MCF 10A (cell line): ENCODE measurements at regions of chr4 and their contacts with region 1.

Region 1: GRCh38 chr4:138242076-138242833 is at the start of gene SLC7A11:
- DNase-seq: peak; percentile 98
- H3K4me3 Mint-ChIP-seq: peak within 1 kb of the TSS; percentile 97
- H3K27ac Mint-ChIP-seq: peak within 1 kb of the TSS; percentile 91
- H3K4me1 Mint-ChIP-seq: peaks cover 11% of the 10 kb centered on the region
- H3K27me3 Mint-ChIP-seq: no peaks in the 10 kb centered on the region
- CTCF ChIP-seq: no peak
- total RNA-seq, gene SLC7A11: 103 and 153 TPM in 2 replicates

Region 2: DNA sequence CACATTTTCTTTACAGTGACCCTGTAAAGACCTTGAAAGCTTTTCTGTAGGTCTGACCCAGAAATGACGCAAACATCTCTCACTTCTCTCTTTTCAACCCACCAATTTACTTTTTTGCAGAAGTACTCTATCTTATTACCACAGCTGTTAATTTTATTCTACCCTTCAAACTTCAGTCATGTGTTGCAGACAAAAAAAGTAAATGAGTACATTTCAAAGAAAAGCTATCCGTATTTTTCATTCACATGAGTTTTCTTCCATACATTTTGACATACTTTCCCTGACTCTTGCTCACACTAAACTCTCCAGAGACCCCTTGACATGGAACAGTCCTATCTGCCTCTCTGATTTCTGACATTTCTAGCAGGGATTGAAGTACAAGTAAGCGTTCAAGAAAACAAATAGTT is 51.8 kb before region 1 on chr4:
- CTCF ChIA-PET with region 1: interaction called, 3 read pairs
- POLR2A ChIA-PET with region 1: interaction called, 19 read pairs
- intact Hi-C with region 1: loop called (anchors 5 kb)
- DNase-seq: no peak
- H3K4me3 Mint-ChIP-seq: no peak overlapping the region
- H3K27ac Mint-ChIP-seq: no peak overlapping the region
- H3K4me1 Mint-ChIP-seq: peaks cover 11% of the 10 kb centered on the region
- H3K27me3 Mint-ChIP-seq: no peaks in the 10 kb centered on the region
- CTCF ChIP-seq: no peak

Region 3: GRCh38 chr4:138209094-138209493 is 33.2 kb before region 1 on chr4:
- CTCF ChIA-PET with region 1: no interaction called
- POLR2A ChIA-PET with region 1: interaction called, 31 read pairs
- intact Hi-C with region 1: no loop called
- DNase-seq: peak; percentile 75
- H3K4me3 Mint-ChIP-seq: no peak overlapping the region
- H3K27ac Mint-ChIP-seq: peak overlapping the region; percentile 49
- H3K4me1 Mint-ChIP-seq: peaks cover 25% of the 10 kb centered on the region
- H3K27me3 Mint-ChIP-seq: no peaks in the 10 kb centered on the region
- CTCF ChIP-seq: no peak

Region 4: GRCh38 chr4:138259801-138260200 is 17.5 kb after region 1 on chr4:
- CTCF ChIA-PET with region 1: interaction called, 6 read pairs
- POLR2A ChIA-PET with region 1: interaction called, 74 read pairs
- intact Hi-C with region 1: loop called (anchors 1 kb)
- DNase-seq: peak; percentile 71
- H3K4me3 Mint-ChIP-seq: no peak overlapping the region
- H3K27ac Mint-ChIP-seq: peak overlapping the region; percentile 93
- H3K4me1 Mint-ChIP-seq: peaks cover 22% of the 10 kb centered on the region
- H3K27me3 Mint-ChIP-seq: no peaks in the 10 kb centered on the region
- CTCF ChIP-seq: no peak

Region 5: DNA sequence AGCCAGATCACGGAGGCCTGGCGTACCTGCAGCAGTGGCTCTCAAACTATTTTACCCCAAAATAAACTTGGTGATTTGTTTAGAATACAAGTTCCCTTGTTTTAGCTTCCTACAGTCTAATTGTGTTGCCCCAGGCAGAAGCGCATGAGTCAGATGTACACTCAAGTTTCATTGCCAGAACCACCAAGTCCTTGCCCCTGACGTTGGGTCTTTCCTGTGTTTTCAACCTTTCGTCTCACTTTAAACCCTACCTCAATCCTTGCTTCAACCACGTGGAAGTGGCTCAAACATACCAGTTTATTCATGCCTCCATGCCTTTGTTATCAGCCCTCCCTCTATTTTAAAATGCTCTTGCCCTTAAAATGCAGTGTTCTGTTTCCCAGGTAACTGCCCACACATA is 66.2 kb after region 1 on chr4:
- CTCF ChIA-PET with region 1: interaction called, 4 read pairs
- POLR2A ChIA-PET with region 1: interaction called, 99 read pairs
- intact Hi-C with region 1: loop called (anchors 1 kb)
- DNase-seq: peak; percentile 96
- H3K4me3 Mint-ChIP-seq: peak overlapping the region; percentile 2
- H3K27ac Mint-ChIP-seq: peak overlapping the region; percentile 89
- H3K4me1 Mint-ChIP-seq: peaks cover 35% of the 10 kb centered on the region
- H3K27me3 Mint-ChIP-seq: no peaks in the 10 kb centered on the region
- CTCF ChIP-seq: no peak

Region 6: GRCh38 chr4:138494931-138495330 is 252.7 kb after region 1 on chr4:
- CTCF ChIA-PET with region 1: no interaction called
- POLR2A ChIA-PET with region 1: no interaction called
- intact Hi-C with region 1: loop called (anchors 2 kb)
- DNase-seq: peak; percentile 60
- H3K4me3 Mint-ChIP-seq: no peak overlapping the region
- H3K27ac Mint-ChIP-seq: no peak overlapping the region
- H3K4me1 Mint-ChIP-seq: no peaks in the 10 kb centered on the region
- H3K27me3 Mint-ChIP-seq: no peaks in the 10 kb centered on the region
- CTCF ChIP-seq: peak; percentile 41